K562 (cell line): ENCODE measurements at regions of chr12 and their contacts with region 1.

Region 1: GRCh38 chr12:11601647-11602046 is 47.8 kb upstream of the ETV6 start:
- DNase-seq: no peak
- ATAC-seq: no peak
- H3K4me3 ChIP-seq: no peak overlapping the region
- H3K27ac ChIP-seq: no peak overlapping the region
- H3K4me1 ChIP-seq: no peaks in the 10 kb centered on the region
- H3K27me3 ChIP-seq: peaks cover 2 to 5% of the 10 kb centered on the region in 2 experiments; a peak in 3 of 5 replicates
- CTCF ChIP-seq: no peak
- EP300 ChIP-seq: no peak
- POLR2A ChIP-seq: no peak
- RAD21 ChIP-seq: no peak

Region 2: GRCh38 chr12:11553871-11554533 is 47.6 kb before region 1 on chr12:
- CTCF ChIA-PET with region 1: no interaction called
- POLR2A ChIA-PET with region 1: no interaction called
- in situ Hi-C with region 1: no loop called
- intact Hi-C with region 1: no loop called
- DNase-seq: peak; percentile 34 to 54 (median 48)
- ATAC-seq: peak; percentile 64
- H3K4me3 ChIP-seq: no peak overlapping the region
- H3K27ac ChIP-seq: no peak overlapping the region
- H3K4me1 ChIP-seq: no peaks in the 10 kb centered on the region
- H3K27me3 ChIP-seq: peaks cover 3 to 4% of the 10 kb centered on the region in 2 experiments; a peak in 3 of 5 replicates
- CTCF ChIP-seq: peak; percentile 29 to 65 (median 59); a peak in 5 of 6 replicates
- EP300 ChIP-seq: no peak
- POLR2A ChIP-seq: no peak
- RAD21 ChIP-seq: peak; percentile 24 to 52; a peak in 3 of 4 replicates

Region 3: GRCh38 chr12:11564984-11565651 is 36.5 kb before region 1 on chr12:
- CTCF ChIA-PET with region 1: no interaction called
- POLR2A ChIA-PET with region 1: no interaction called
- in situ Hi-C with region 1: no loop called
- intact Hi-C with region 1: no loop called
- DNase-seq: no peak
- ATAC-seq: no peak
- H3K4me3 ChIP-seq: no peak overlapping the region
- H3K27ac ChIP-seq: no peak overlapping the region
- H3K4me1 ChIP-seq: no peaks in the 10 kb centered on the region
- H3K27me3 ChIP-seq: no peaks in the 10 kb centered on the region; a peak in 1 of 5 replicates
- CTCF ChIP-seq: no peak
- EP300 ChIP-seq: no peak
- POLR2A ChIP-seq: no peak
- RAD21 ChIP-seq: no peak

Region 4: DNA sequence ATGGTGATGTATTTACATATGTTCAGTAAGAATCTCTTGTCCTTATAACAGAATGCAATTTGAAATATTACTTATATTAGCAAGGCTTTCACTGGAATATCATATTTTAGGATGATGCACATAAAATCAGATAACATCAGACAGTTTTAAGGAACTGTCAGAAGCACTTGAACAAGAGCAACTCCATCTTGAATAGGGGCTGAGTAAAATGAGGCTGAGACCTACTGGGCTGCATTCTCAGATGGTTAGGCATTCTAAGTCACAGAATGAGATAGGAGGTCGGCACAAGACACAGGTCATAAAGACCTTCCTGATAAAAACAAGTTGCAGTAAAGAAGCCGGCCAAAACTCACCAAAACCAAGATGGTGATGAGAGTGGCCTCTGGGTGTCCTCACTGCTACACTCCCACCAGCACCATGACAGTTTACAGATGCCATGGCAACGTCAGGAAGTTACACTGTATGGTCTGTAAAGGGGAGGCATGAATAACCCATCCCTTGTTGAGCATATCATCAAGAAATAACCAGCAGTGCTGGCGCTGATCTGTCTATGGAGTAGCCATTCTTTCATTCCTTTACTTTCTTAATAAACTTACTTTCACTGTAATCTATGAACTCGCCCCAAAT is 20.3 kb after region 1 on chr12:
- CTCF ChIA-PET with region 1: no interaction called
- POLR2A ChIA-PET with region 1: no interaction called
- in situ Hi-C with region 1: no loop called
- intact Hi-C with region 1: loop called (anchors 2 kb)
- DNase-seq: peak in 1 of 4 experiments; percentile 21
- ATAC-seq: no peak
- H3K4me3 ChIP-seq: no peak overlapping the region
- H3K27ac ChIP-seq: no peak overlapping the region
- H3K4me1 ChIP-seq: peaks cover 0 to 8% of the 10 kb centered on the region in 2 experiments; a peak in 4 of 5 replicates
- H3K27me3 ChIP-seq: no peaks in the 10 kb centered on the region
- CTCF ChIP-seq: peak in 2 of 3 experiments; percentile 13 to 33; a peak in 2 of 6 replicates
- EP300 ChIP-seq: no peak
- POLR2A ChIP-seq: no peak
- RAD21 ChIP-seq: peak; percentile 22 to 59; a peak in 2 of 4 replicates